Naive thymus-derived CD4-positive, alpha-beta T cell (primary cell): ENCODE measurements at regions of chr16 and their contacts with region 1.

Region 1: DNA sequence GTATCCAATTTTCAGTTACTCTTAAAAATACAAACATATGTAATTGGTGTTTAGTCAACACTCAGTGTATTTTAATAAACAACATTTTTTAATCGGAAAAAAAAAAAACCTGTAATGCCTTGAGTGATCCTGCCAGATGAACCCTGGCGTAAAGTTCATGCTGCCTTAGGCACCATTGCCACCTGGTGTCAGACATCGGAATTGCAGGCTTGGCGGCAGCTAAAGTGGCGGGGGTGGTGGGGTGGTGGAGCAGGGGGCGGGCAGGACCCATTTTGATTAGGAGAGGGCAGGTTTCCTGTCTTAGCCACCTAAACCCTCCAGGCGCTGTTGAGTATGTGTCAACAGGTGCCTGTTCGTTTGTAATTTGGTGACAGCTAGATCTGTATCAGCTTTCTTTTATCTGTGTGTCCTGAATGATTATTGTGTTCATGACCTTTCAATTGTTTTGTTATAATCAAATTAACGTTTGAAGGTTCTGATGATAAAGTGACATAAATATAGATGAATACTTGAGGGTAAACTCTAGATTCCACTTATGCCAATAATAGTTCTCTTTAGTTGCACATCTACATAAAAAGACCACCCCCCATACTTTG is 588.7 kb downstream of the CDH13 start:
- DNase-seq: peak in 3 of 9 donors; percentile 2 to 49 (median 22)
- ATAC-seq: peak; percentile 60
- H3K4me3 ChIP-seq: no peak overlapping the region
- H3K4me3 Mint-ChIP-seq: no peak overlapping the region
- H3K27ac ChIP-seq: no peak overlapping the region
- H3K27ac Mint-ChIP-seq: no peak overlapping the region
- H3K4me1 ChIP-seq: no peaks in the 10 kb centered on the region
- H3K4me1 Mint-ChIP-seq: no peaks in the 10 kb centered on the region
- H3K27me3 ChIP-seq: no peaks in the 10 kb centered on the region
- H3K27me3 Mint-ChIP-seq: peaks cover 0 to 5% (median 0%) of the 10 kb centered on the region in 5 donors

Region 2: GRCh38 chr16:83113317-83113716 is 102.2 kb before region 1 on chr16:
- CTCF ChIA-PET with region 1: no interaction called
- POLR2A ChIA-PET with region 1: no interaction called
- intact Hi-C with region 1: loop called in 1 of 2 experiments (anchors 1 kb)
- DNase-seq: no peak
- ATAC-seq: no peak
- H3K4me3 ChIP-seq: no peak overlapping the region
- H3K4me3 Mint-ChIP-seq: no peak overlapping the region
- H3K27ac ChIP-seq: no peak overlapping the region
- H3K27ac Mint-ChIP-seq: no peak overlapping the region
- H3K4me1 ChIP-seq: no peaks in the 10 kb centered on the region
- H3K4me1 Mint-ChIP-seq: peaks cover 0 to 3% (median 0%) of the 10 kb centered on the region in 7 donors
- H3K27me3 ChIP-seq: no peaks in the 10 kb centered on the region
- H3K27me3 Mint-ChIP-seq: peaks cover 0 to 13% (median 8%) of the 10 kb centered on the region in 5 donors